PC-3 (cell line): ENCODE measurements at regions of chrX and their contacts with region 1.

Region 1: GRCh38 chrX:95764972-95765451 is 919.6 kb upstream of the DIAPH2 start:
- DNase-seq: peak; percentile 67
- ATAC-seq: peak; percentile 74
- H3K4me3 ChIP-seq: no peak overlapping the region
- H3K27ac ChIP-seq: no peak overlapping the region
- H3K4me1 ChIP-seq: no peaks in the 10 kb centered on the region
- H3K27me3 ChIP-seq: no peaks in the 10 kb centered on the region
- CTCF ChIP-seq: peak; percentile 66

Region 2: DNA sequence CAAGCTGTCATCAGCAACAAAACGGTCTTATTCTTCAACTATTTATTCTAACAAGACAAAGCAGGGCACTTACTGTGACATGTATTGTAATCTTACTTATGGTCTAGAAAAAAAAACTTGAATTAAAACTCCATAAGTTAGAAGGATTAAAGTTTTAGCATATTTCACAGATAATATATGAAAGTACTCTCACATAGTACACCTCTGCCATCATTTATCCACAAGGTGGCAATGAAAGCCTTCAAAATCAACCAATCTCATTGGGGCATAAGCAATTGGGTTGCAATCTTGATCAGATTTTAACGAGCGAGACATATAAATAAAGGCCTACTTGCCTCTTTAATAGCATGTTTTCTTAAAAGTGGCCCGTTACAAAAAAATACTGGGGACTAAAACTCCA is 708.1 kb before region 1 on chrX:
- CTCF ChIA-PET with region 1: no interaction called
- POLR2A ChIA-PET with region 1: no interaction called
- intact Hi-C with region 1: loop called (anchors 10 kb)
- DNase-seq: peak; percentile 46
- ATAC-seq: peak; percentile 51
- H3K4me3 ChIP-seq: no peak overlapping the region
- H3K27ac ChIP-seq: no peak overlapping the region
- H3K4me1 ChIP-seq: peaks cover 21% of the 10 kb centered on the region
- H3K27me3 ChIP-seq: no peaks in the 10 kb centered on the region
- CTCF ChIP-seq: peak; percentile 55

Region 3: GRCh38 chrX:95346856-95347255 is 418.2 kb before region 1 on chrX:
- CTCF ChIA-PET with region 1: no interaction called
- POLR2A ChIA-PET with region 1: no interaction called
- intact Hi-C with region 1: loop called (anchors 10 kb)
- DNase-seq: peak; percentile 17
- ATAC-seq: no peak
- H3K4me3 ChIP-seq: no peak overlapping the region
- H3K27ac ChIP-seq: no peak overlapping the region
- H3K4me1 ChIP-seq: no peaks in the 10 kb centered on the region
- H3K27me3 ChIP-seq: no peaks in the 10 kb centered on the region
- CTCF ChIP-seq: peak; percentile 56

Region 4: GRCh38 chrX:95435198-95435597 is 329.8 kb before region 1 on chrX:
- CTCF ChIA-PET with region 1: no interaction called
- POLR2A ChIA-PET with region 1: no interaction called
- intact Hi-C with region 1: no loop called
- DNase-seq: peak; percentile 23
- ATAC-seq: no peak
- H3K4me3 ChIP-seq: no peak overlapping the region
- H3K27ac ChIP-seq: no peak overlapping the region
- H3K4me1 ChIP-seq: no peaks in the 10 kb centered on the region
- H3K27me3 ChIP-seq: no peaks in the 10 kb centered on the region
- CTCF ChIP-seq: no peak

Region 5: DNA sequence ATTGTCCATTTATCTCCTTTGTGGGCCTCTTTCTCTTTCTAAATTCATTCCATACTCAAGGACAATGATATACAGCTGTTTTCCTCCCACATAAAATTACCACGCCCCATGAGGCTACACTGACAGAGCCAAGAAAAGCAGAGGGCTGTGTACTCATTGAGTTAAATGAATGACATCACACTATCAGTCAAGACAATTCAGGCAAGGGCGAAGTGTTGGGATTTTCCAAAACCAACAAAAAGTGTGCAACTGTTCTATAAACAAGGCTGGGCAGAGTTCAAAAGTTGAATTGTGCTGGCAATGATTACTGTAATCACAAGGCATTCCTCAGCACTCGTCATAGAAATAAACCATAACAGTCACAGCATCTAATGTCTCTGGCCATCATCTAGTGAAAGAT is 120.1 kb after region 1 on chrX:
- CTCF ChIA-PET with region 1: no interaction called
- POLR2A ChIA-PET with region 1: no interaction called
- intact Hi-C with region 1: no loop called
- DNase-seq: peak; percentile 5
- ATAC-seq: no peak
- H3K4me3 ChIP-seq: no peak overlapping the region
- H3K27ac ChIP-seq: no peak overlapping the region
- H3K4me1 ChIP-seq: no peaks in the 10 kb centered on the region
- H3K27me3 ChIP-seq: no peaks in the 10 kb centered on the region
- CTCF ChIP-seq: no peak

Region 6: GRCh38 chrX:95903490-95903889 is 138.5 kb after region 1 on chrX:
- CTCF ChIA-PET with region 1: no interaction called
- POLR2A ChIA-PET with region 1: no interaction called
- intact Hi-C with region 1: loop called (anchors 10 kb)
- DNase-seq: peak; percentile 34
- ATAC-seq: peak; percentile 62
- H3K4me3 ChIP-seq: no peak overlapping the region
- H3K27ac ChIP-seq: no peak overlapping the region
- H3K4me1 ChIP-seq: no peaks in the 10 kb centered on the region
- H3K27me3 ChIP-seq: no peaks in the 10 kb centered on the region
- CTCF ChIP-seq: peak; percentile 57